ENCODE measurements at regions of chr1 and their contacts with region 1.

Region 1: DNA sequence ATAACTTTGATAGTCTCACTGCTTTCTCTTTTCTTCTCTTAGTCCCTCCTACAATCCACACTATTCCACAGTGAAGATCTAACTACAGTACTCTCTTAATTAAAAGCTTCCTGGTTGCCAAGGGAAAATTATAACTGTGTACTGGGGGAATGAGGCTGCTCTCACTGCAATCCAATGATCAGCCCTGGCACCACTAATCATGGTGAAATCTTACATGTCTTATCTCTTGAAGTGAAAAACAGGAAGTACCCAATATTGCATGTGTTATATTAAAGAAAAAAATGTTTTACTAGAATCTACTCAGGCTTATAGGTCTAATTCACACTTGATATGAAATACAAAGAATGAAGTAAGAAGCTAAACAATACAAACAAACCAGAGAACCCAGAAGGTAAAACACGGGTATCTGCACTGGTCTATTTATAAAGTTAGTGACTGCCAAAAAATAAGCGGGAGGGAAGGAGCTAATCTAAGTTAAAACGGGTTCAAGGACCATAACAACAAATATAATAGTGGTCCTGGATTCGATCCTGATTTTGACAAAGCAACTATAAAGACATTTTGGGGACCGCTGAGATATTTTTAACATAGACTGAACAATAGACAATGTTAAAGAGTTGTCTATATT is 57.5 kb downstream of the RGS2 start:
- DNase-seq: no peak
- H3K4me3 ChIP-seq: no peak overlapping the region
- H3K27ac ChIP-seq: no peak overlapping the region
- H3K4me1 ChIP-seq: no peaks in the 10 kb centered on the region
- H3K27me3 ChIP-seq: no peaks in the 10 kb centered on the region
- CTCF ChIP-seq: no peak
- EP300 ChIP-seq: no peak
- POLR2A ChIP-seq: no peak

Region 2: DNA sequence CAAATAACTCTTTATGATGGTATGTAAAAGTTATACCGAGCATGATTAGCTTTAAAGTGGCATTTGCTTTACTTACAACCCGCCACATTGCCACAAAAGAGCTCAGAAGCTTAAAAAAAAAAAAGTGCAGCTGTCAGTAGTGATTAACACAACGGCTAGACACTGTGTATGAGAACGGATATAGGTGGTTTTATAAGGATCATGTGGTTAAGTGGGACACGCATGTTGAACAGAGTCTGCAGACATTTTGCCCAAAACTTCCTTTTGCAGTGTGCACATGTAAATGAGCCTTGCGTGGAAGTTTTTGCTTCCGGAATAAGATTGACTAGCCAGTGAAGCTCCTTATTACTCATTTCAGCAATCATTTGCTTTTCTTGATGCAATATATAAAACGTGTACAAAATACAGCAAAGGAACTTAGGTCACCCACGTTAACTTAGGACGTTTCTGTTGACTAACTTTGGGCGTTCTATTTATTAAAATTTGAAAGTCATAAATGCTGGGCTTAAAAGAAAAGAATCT is 349.5 kb before region 1 on chr1:
- in situ Hi-C with region 1: no loop called
- intact Hi-C with region 1: no loop called
- DNase-seq: peak; percentile 36
- H3K4me3 ChIP-seq: no peak overlapping the region
- H3K27ac ChIP-seq: peak overlapping the region; percentile 4 to 59 (median 52)
- H3K4me1 ChIP-seq: peaks cover 0 to 27% (median 5%) of the 10 kb centered on the region in 4 donors
- H3K27me3 ChIP-seq: no peaks in the 10 kb centered on the region
- CTCF ChIP-seq: no peak
- EP300 ChIP-seq: no peak
- POLR2A ChIP-seq: no peak

Region 3: DNA sequence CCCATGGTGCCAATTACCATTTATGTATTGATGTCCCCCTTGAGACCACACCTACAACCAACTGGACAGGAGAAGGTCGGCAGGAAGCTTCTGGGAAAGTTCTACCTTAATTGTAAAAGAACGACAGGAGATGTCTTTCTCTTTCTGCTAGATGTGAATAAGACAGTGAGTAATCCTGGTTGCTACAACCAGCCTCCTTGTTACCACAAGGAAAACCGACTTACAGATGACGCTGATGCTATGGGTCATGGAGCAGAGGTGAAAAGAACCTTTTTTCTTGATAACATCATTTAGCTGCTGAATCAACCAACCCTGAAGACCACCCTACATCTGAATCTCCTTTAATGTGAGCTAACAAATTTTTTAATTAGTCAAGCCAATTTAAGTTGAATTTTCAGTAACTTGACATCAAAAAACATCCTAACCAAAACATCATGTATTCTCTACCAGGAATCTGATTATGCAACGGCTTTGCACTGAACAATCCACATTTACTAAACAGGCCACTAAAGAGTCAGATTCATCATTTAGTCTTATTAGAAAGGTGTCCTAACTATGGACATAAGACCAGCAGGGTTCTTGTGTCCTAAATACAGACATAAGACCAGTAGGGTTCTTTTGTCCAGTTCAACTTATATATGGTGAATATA is 34.5 kb before region 1 on chr1:
- in situ Hi-C with region 1: no loop called
- intact Hi-C with region 1: loop called (anchors 1 kb)
- DNase-seq: no peak
- H3K4me3 ChIP-seq: no peak overlapping the region
- H3K27ac ChIP-seq: no peak overlapping the region
- H3K4me1 ChIP-seq: peaks cover 0 to 17% (median 4%) of the 10 kb centered on the region in 4 donors
- H3K27me3 ChIP-seq: no peaks in the 10 kb centered on the region
- CTCF ChIP-seq: no peak
- EP300 ChIP-seq: no peak
- POLR2A ChIP-seq: no peak

Measured in transverse colon (tissue), 4 donors.